Activated CD4-positive, alpha-beta T cell treated with anti-CD3 and anti-CD28 coated beads, Interleukin-2, amount 10 ng/mL, durations not matched to agents 7 days and 5 days (primary cell): ENCODE measurements at regions of chr3 and their contacts with region 1.

Region 1: DNA sequence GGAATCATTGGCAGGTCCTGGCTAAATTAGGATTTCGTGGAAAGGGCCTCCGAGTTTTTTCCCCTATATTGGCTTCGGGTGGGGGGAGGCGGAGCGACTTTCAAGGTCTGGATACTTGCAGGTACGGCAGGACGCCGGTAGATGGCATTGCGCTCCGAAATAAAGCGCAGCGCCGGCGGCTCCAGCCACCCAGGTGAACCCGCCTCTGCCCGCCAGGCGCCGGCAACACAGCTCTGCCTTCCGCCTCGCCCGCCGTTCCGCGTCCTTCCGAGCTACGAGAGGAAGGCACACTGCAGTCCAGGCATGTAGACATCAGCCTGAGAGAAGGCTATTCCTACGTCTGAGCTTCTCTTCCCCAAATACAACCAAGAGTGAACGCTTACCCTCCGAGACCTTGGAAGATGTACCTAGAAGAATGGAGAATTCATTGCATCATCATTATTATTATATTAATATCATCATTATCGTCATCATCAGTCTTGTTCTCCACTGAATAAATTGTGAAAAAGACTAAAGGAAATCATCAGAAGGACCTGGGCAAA is 514.1 kb downstream of the MECOM start:
- DNase-seq: peak; percentile 74
- H3K4me3 Mint-ChIP-seq: no peak overlapping the region
- H3K27ac Mint-ChIP-seq: peak overlapping the region; percentile 5
- H3K4me1 Mint-ChIP-seq: peaks cover 18% of the 10 kb centered on the region
- H3K27me3 Mint-ChIP-seq: peaks cover 72% of the 10 kb centered on the region

Region 2: GRCh38 chr3:169034401-169034800 is 115.0 kb before region 1 on chr3:
- CTCF ChIA-PET with region 1: no interaction called
- POLR2A ChIA-PET with region 1: no interaction called
- DNase-seq: no peak
- H3K4me3 Mint-ChIP-seq: no peak overlapping the region
- H3K27ac Mint-ChIP-seq: no peak overlapping the region
- H3K4me1 Mint-ChIP-seq: no peaks in the 10 kb centered on the region
- H3K27me3 Mint-ChIP-seq: no peaks in the 10 kb centered on the region

Region 3: DNA sequence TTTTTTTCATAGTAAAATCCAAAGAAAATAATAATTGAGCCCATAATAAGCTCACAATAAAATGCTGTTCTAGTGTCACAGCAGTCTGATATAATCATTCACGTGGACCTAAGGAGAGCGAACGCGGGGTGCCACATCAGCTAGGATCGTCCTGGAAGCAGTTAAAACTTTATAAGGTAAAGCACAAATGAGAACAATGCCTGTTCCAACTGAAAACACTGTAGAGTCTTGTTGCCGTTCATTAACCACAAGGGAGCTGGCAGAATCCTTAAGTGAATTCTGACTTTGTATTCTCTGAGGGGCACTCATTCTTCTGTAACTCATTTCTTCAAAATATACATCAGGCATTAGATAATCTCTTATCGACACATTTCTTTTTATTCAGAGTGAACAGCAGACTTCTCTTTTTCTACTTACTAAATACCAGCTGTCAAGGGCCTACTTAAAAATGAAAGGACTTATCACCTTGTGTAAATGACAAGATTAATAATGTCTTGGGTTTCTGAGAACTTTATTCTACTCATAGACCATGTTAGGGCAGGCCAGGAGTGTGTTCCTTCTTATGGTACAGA is 10.5 kb before region 1 on chr3:
- CTCF ChIA-PET with region 1: no interaction called
- POLR2A ChIA-PET with region 1: no interaction called
- DNase-seq: no peak
- H3K4me3 Mint-ChIP-seq: no peak overlapping the region
- H3K27ac Mint-ChIP-seq: no peak overlapping the region
- H3K4me1 Mint-ChIP-seq: no peaks in the 10 kb centered on the region
- H3K27me3 Mint-ChIP-seq: peaks cover 43% of the 10 kb centered on the region

Region 4: DNA sequence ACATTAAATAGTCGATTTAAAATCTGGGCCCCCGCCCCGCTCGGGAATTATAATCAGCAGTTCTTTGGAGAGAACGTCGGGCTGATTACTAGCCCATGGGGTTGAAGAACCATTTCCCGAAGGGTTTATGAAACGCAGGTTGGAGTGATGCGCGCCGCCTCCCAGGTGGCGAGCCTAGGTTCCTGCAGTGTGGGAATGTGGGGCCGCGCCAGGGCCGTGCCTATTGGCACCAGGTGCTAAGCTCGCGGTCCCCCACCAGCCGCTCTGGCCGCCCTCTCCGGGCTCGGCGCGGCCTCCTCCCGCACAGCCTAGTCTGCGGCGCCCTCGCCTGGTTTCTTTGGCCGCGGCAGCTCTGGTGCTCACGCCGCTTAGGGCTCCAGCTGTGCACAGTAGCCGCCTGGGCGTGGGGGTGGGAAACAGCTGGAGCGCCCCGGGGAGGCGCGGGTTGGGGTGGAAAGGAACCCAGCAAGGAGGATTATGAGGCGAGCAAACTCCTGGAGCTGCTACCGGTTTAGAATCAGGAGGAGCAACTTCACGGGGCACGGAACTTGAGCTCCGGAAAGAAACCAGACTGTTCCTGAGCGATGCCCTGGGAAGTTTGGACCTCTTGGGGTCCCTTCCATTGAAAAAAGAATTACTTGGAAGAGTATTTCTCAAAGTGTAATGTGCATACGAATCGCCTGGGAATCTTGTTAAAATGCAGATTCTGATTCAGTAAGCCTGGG is 519.7 kb after region 1 on chr3:
- CTCF ChIA-PET with region 1: interaction called, 18 read pairs
- POLR2A ChIA-PET with region 1: no interaction called
- DNase-seq: peak; percentile 47
- H3K4me3 Mint-ChIP-seq: peak overlapping the region; percentile 45
- H3K27ac Mint-ChIP-seq: no peak overlapping the region
- H3K4me1 Mint-ChIP-seq: peaks cover 20% of the 10 kb centered on the region
- H3K27me3 Mint-ChIP-seq: peaks cover 92% of the 10 kb centered on the region